ENCODE measurements at regions of chr2 and their contacts with region 1.

Region 1: DNA sequence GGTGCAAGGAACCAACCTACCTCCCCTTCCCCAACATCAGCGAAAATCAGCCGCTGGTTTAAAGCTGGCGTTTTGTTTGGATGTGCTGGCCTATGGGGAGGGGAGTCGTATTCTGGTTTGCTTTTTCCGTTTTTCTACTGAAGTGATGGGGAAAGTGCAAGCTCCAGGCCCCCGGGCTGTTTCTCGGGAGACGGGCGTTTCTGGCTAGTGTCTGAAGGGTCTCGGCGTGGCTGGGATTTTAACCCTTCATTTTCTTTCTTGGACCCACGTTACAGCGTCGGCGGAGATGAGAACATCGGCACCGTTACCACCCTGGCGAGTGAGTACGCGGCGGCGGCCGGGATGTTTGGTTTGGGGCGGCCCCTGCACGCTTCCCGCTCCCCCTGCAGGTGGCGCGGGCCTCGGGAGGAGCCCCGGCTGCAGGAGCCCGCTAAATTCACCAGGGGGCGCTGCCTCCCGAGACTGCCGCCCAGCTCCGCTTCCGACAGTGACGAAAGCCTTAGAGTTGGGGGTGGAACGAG is 70.7 kb downstream of the PLB1 start:
- DNase-seq: peak; percentile 81 to 96 (median 90)
- ATAC-seq: peak; percentile 100
- H3K4me3 ChIP-seq: peak overlapping the region; percentile 74
- H3K4me3 Mint-ChIP-seq: peak overlapping the region; percentile 84 to 95 (median 92)
- H3K27ac ChIP-seq: peak overlapping the region; percentile 84
- H3K27ac Mint-ChIP-seq: peak overlapping the region; percentile 59 to 96 (median 92)
- H3K4me1 ChIP-seq: peaks cover 6 to 12% of the 10 kb centered on the region in 2 donors
- H3K4me1 Mint-ChIP-seq: peaks cover 6 to 24% (median 16%) of the 10 kb centered on the region in 7 donors
- H3K27me3 ChIP-seq: peaks cover 0 to 3% of the 10 kb centered on the region in 2 donors
- H3K27me3 Mint-ChIP-seq: peaks cover 0 to 6% (median 0%) of the 10 kb centered on the region in 5 donors

Region 2: DNA sequence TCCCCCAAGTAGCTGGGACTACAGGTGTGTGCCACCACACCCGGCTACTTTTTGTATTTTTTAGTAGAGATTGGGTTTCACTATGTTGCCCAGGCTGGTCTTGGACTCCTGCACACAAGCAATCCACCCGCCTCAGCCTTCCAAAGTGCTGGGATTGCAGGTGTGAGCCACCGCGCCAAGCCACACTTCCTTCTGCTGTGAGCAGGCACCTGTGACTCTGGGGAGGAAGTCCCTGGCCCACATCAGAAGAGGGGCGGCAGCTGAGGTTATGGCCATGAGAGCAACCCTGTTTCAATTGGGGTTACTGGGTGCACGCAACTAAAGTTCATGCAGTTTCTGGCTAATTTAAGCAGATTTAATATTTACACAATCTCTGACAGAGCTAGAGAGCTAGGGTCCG is 20.3 kb after region 1 on chr2:
- CTCF ChIA-PET with region 1: interaction called, 12 read pairs
- POLR2A ChIA-PET with region 1: interaction called, 3 read pairs
- intact Hi-C with region 1: loop called (anchors 1 to 2 kb)
- DNase-seq: peak in 8 of 9 donors; percentile 41 to 73 (median 68)
- ATAC-seq: peak; percentile 79
- H3K4me3 ChIP-seq: peak overlapping the region; percentile 43
- H3K4me3 Mint-ChIP-seq: peak overlapping the region; percentile 66 to 82 (median 78)
- H3K27ac ChIP-seq: no peak overlapping the region
- H3K27ac Mint-ChIP-seq: peak overlapping the region in 6 of 9 donors; percentile 47 to 80 (median 74)
- H3K4me1 ChIP-seq: peaks cover 11 to 21% of the 10 kb centered on the region in 2 donors
- H3K4me1 Mint-ChIP-seq: peaks cover 19 to 52% (median 30%) of the 10 kb centered on the region in 7 donors
- H3K27me3 ChIP-seq: no peaks in the 10 kb centered on the region
- H3K27me3 Mint-ChIP-seq: no peaks in the 10 kb centered on the region

Region 3: DNA sequence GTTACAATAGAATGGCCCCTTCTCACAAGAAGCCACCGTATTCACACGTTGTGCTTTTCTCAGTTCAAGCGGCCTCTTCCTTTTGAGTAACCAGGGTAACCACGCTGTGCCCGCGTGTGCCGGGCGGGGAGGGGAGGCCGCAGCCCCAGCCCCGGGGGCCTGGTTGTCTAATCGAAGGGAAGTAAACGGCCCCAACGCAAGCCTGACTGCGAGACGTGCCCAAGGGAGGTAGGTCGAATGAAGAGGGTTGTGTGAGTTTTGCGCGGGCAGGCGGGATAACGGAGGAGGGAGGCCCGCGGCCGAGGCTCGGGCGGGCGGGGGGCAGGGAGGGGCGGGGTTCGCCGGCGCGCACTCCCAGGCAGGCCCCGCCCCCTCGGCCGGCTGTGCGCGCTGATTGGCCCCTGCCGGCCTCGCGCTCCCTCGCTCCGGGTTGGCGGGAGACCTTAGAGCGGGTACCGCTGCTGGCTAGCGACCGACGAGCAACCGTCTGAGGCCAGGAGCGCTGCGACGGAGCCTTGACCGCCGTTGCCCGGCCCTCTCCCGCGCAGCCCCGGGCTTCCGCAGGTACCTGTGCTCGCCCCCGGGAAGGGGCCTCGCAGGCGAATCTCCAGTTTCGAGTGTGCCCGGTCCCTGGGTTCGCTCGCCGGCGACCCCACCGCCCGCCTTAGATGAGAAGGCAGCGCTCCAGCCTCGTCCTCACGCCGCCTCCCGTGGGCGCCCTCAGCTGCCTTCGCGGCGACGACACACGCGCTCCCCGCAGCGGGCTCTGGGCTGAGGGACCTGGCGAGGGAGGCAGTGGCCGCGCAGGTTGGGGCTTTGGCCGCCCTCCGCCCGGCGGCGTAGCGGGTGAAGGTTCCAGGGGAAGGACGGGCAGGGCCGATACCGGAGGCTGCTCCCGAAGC is 244.1 kb after region 1 on chr2 and contains the start of gene SPDYA:
- CTCF ChIA-PET with region 1: no interaction called
- POLR2A ChIA-PET with region 1: interaction called, 3 read pairs
- intact Hi-C with region 1: loop called (anchors 1 to 2 kb)
- DNase-seq: peak; percentile 65 to 88 (median 77)
- ATAC-seq: peak; percentile 96
- H3K4me3 ChIP-seq: peak within 1 kb of the TSS; percentile 63
- H3K4me3 Mint-ChIP-seq: peak within 1 kb of the TSS; percentile 76 to 94 (median 84)
- H3K27ac ChIP-seq: peak within 1 kb of the TSS; percentile 50
- H3K27ac Mint-ChIP-seq: peak within 1 kb of the TSS; percentile 11 to 73 (median 59)
- H3K4me1 ChIP-seq: peaks cover 5 to 9% of the 10 kb centered on the region in 2 donors
- H3K4me1 Mint-ChIP-seq: peaks cover 7 to 23% (median 16%) of the 10 kb centered on the region in 7 donors
- H3K27me3 ChIP-seq: no peaks in the 10 kb centered on the region
- H3K27me3 Mint-ChIP-seq: peaks cover 0 to 8% (median 0%) of the 10 kb centered on the region in 5 donors
- total RNA-seq, gene SPDYA: 1.3 to 9.8 (median 4.6) TPM

Region 4: GRCh38 chr2:28870146-28870891 is 303.7 kb after region 1 on chr2 and contains the start of gene TRMT61B:
- CTCF ChIA-PET with region 1: no interaction called
- POLR2A ChIA-PET with region 1: interaction called, 3 read pairs
- intact Hi-C with region 1: loop called in 1 of 2 experiments (anchors 2 kb)
- DNase-seq: peak; percentile 94 to 97 (median 95)
- ATAC-seq: peak; percentile 98
- H3K4me3 ChIP-seq: peak within 1 kb of the TSS; percentile 96
- H3K4me3 Mint-ChIP-seq: peak within 1 kb of the TSS; percentile 90 to 98 (median 96)
- H3K27ac ChIP-seq: peak within 1 kb of the TSS; percentile 87
- H3K27ac Mint-ChIP-seq: peak within 1 kb of the TSS; percentile 95 to 100 (median 98)
- H3K4me1 ChIP-seq: peaks cover 19 to 22% of the 10 kb centered on the region in 2 donors
- H3K4me1 Mint-ChIP-seq: peaks cover 22 to 48% (median 37%) of the 10 kb centered on the region in 7 donors
- H3K27me3 ChIP-seq: no peaks in the 10 kb centered on the region
- H3K27me3 Mint-ChIP-seq: peaks cover 0 to 6% (median 2%) of the 10 kb centered on the region in 5 donors
- total RNA-seq, gene TRMT61B: 14.8 to 24.5 (median 20.5) TPM

Region 5: DNA sequence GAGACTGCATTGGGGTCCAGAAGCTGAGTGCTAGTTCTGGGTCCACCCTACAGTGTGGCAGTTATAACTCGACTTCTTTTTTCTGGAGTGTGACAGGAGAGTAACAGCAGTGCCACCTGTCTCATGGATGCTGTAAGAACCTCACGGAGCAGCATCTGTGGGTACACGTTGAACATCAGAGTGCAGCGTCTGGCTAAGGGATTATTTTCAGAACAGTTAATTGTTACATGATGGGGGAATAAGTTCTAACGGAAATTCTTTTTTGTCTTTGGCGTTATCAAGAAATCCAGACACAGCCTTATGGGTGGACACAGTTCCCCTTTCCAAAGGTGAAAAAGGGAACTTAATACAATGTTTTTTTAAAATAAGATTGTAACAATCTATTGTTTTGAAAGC is 386.2 kb after region 1 on chr2:
- CTCF ChIA-PET with region 1: no interaction called
- POLR2A ChIA-PET with region 1: no interaction called
- intact Hi-C with region 1: loop called in 1 of 2 experiments (anchors 2 kb)
- DNase-seq: peak in 1 of 9 donors; percentile 12
- ATAC-seq: peak; percentile 56
- H3K4me3 ChIP-seq: no peak overlapping the region
- H3K4me3 Mint-ChIP-seq: no peak overlapping the region
- H3K27ac ChIP-seq: no peak overlapping the region
- H3K27ac Mint-ChIP-seq: peak overlapping the region in 3 of 9 donors; percentile 4 to 28 (median 22)
- H3K4me1 ChIP-seq: no peaks in the 10 kb centered on the region
- H3K4me1 Mint-ChIP-seq: peaks cover 0 to 12% (median 0%) of the 10 kb centered on the region in 7 donors
- H3K27me3 ChIP-seq: no peaks in the 10 kb centered on the region
- H3K27me3 Mint-ChIP-seq: peaks cover 0 to 6% (median 0%) of the 10 kb centered on the region in 5 donors

Region 6: DNA sequence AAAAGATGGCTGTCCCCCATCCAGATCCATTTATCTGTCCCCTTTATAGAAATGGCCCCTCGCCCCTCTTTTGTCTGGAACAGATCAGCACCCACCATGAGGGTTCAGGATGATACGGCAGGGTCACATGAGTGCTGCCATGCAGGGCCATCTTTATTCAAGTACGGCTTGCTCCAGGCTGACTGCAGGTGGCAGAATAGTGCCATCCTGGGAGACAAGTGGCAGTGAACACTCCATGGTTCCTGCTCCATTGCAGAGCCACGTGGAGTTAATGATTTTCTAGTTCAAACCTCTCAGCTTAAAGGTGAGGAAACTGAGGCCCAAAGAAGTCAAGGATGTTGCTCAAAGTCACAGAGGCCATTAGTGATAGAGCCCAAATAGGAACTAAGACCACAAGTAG is 729.3 kb after region 1 on chr2:
- CTCF ChIA-PET with region 1: no interaction called
- POLR2A ChIA-PET with region 1: no interaction called
- intact Hi-C with region 1: no loop called
- DNase-seq: no peak
- ATAC-seq: no peak
- H3K4me3 ChIP-seq: no peak overlapping the region
- H3K4me3 Mint-ChIP-seq: no peak overlapping the region
- H3K27ac ChIP-seq: no peak overlapping the region
- H3K27ac Mint-ChIP-seq: no peak overlapping the region
- H3K4me1 ChIP-seq: no peaks in the 10 kb centered on the region
- H3K4me1 Mint-ChIP-seq: peaks cover 0 to under 1% (median 0%) of the 10 kb centered on the region in 7 donors
- H3K27me3 ChIP-seq: no peaks in the 10 kb centered on the region
- H3K27me3 Mint-ChIP-seq: peaks cover 28 to 64% (median 44%) of the 10 kb centered on the region in 5 donors